MCF 10A (cell line): ENCODE measurements at regions of chr14 and their contacts with region 1.

Region 1: DNA sequence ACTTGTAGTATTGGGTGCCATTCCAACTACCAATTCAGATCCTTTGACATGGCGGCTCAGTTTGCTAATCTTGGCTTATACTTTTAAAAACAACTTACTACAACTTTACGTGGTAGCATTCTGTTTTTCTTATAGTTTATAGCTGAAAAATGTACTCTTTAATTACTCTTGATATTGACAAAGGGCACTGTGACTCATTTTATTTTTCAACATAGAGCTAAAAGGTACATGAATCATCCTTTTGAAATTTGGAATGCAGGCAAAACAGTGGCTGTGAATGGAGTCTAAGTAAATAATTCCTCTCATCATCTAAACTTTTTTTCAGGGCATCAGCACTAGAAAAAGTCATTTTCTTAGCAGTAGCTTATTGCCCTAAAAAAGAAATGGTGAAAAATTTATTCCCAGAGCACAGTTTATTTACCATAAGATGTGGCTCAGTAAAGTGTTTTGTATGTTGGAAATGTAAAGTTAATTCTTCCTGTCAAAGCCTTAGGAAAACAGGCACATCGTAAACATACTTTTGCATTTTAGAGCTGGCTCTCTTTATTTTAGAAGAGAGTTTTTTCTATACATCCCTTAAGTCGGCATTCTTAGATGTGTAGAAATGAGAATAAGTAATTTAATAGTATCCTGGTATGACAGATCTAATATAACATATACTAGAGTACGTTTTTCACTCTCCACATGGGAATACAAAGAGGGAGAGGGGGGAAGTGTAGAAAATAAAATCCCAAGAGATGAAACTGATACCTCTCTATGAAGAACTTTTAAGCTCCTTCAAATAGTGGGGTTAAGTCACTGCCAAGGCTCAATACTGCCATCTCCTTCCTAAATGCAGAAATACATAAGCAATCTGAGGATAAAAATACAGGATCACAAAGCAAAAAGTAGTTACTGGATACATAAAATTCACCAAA is 55.2 kb downstream of the SLC25A21 start:
- DNase-seq: peak; percentile 83
- H3K4me3 Mint-ChIP-seq: peak overlapping the region; percentile 62
- H3K27ac Mint-ChIP-seq: peak overlapping the region; percentile 98
- H3K4me1 Mint-ChIP-seq: peaks cover 31% of the 10 kb centered on the region
- H3K27me3 Mint-ChIP-seq: no peaks in the 10 kb centered on the region
- CTCF ChIP-seq: peak; percentile 70

Region 2: GRCh38 chr14:36647824-36648753 is 469.1 kb before region 1 on chr14:
- CTCF ChIA-PET with region 1: interaction called, 82 read pairs
- POLR2A ChIA-PET with region 1: interaction called, 11 read pairs
- intact Hi-C with region 1: loop called (anchors 1 kb)
- DNase-seq: peak; percentile 63
- H3K4me3 Mint-ChIP-seq: peak overlapping the region; percentile 71
- H3K27ac Mint-ChIP-seq: no peak overlapping the region
- H3K4me1 Mint-ChIP-seq: peaks cover 5% of the 10 kb centered on the region
- H3K27me3 Mint-ChIP-seq: no peaks in the 10 kb centered on the region
- CTCF ChIP-seq: peak; percentile 65

Region 3: GRCh38 chr14:36767603-36768281 is 349.4 kb before region 1 on chr14:
- CTCF ChIA-PET with region 1: interaction called, 4 read pairs
- POLR2A ChIA-PET with region 1: interaction called, 12 read pairs
- intact Hi-C with region 1: no loop called
- DNase-seq: peak; percentile 55
- H3K4me3 Mint-ChIP-seq: no peak overlapping the region
- H3K27ac Mint-ChIP-seq: peak overlapping the region; percentile 32
- H3K4me1 Mint-ChIP-seq: peaks cover 31% of the 10 kb centered on the region
- H3K27me3 Mint-ChIP-seq: no peaks in the 10 kb centered on the region
- CTCF ChIP-seq: no peak

Region 4: GRCh38 chr14:36941783-36942521 is 175.2 kb before region 1 on chr14:
- CTCF ChIA-PET with region 1: interaction called, 56 read pairs
- POLR2A ChIA-PET with region 1: interaction called, 28 read pairs
- intact Hi-C with region 1: loop called (anchors 1 kb)
- DNase-seq: peak; percentile 78
- H3K4me3 Mint-ChIP-seq: no peak overlapping the region
- H3K27ac Mint-ChIP-seq: peak overlapping the region; percentile 96
- H3K4me1 Mint-ChIP-seq: peaks cover 24% of the 10 kb centered on the region
- H3K27me3 Mint-ChIP-seq: no peaks in the 10 kb centered on the region
- CTCF ChIP-seq: peak; percentile 90

Region 5: DNA sequence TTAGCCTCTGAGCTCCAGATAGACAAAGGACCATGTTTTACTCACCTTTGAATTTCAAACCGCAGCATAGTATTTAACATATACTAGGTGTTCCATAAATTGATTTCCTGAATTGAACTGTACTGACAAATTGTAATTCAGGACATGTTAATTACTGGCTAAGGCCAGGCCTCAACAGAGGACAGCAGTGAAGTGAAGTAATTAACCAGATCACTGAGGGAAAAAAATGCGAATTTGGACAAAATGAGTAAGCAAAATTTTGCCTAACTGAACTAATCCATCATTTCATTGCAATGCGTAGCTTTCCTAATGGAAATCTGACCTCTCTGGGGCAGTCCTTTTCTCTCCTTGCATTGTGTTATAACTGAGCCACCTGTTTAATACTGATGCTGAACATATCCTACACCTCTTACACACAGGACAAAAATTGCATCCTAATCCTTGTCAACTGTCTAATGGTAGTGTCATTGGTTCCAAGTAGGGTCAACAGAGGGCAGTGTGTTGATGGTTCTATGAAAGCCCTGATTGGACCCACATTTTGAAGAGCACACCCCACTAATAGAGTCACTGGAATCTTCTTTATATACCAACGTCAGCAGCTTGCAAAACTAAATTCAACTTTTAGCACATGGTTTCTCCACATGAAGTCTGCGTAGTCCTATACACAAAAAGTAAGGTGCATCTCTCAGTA is 93.2 kb before region 1 on chr14:
- CTCF ChIA-PET with region 1: interaction called, 14 read pairs
- POLR2A ChIA-PET with region 1: no interaction called
- intact Hi-C with region 1: no loop called
- DNase-seq: peak; percentile 17
- H3K4me3 Mint-ChIP-seq: no peak overlapping the region
- H3K27ac Mint-ChIP-seq: no peak overlapping the region
- H3K4me1 Mint-ChIP-seq: no peaks in the 10 kb centered on the region
- H3K27me3 Mint-ChIP-seq: no peaks in the 10 kb centered on the region
- CTCF ChIP-seq: no peak

Region 6: DNA sequence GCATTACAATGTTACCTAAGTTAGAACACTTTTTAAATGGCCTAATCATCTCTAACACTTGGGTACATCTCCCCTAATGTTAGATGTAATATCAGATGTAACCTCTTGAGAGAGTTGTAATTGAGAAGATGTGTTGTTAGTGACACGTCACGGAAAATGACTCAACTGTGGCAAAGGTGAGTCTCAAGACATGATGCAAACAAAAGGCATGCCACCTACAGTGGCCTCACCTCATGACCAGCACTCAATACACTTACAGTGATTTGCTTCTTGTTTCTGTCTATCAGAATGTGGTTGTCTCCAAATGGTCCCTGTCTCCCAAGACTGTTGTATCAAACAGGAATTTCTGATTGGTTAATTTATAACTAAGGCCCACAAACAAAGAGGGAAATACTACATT is 36.0 kb before region 1 on chr14:
- CTCF ChIA-PET with region 1: interaction called, 3 read pairs
- POLR2A ChIA-PET with region 1: interaction called, 4 read pairs
- intact Hi-C with region 1: loop called (anchors 2 kb)
- DNase-seq: peak; percentile 84
- H3K4me3 Mint-ChIP-seq: no peak overlapping the region
- H3K27ac Mint-ChIP-seq: peak overlapping the region; percentile 42
- H3K4me1 Mint-ChIP-seq: no peaks in the 10 kb centered on the region
- H3K27me3 Mint-ChIP-seq: no peaks in the 10 kb centered on the region
- CTCF ChIP-seq: no peak

Region 7: DNA sequence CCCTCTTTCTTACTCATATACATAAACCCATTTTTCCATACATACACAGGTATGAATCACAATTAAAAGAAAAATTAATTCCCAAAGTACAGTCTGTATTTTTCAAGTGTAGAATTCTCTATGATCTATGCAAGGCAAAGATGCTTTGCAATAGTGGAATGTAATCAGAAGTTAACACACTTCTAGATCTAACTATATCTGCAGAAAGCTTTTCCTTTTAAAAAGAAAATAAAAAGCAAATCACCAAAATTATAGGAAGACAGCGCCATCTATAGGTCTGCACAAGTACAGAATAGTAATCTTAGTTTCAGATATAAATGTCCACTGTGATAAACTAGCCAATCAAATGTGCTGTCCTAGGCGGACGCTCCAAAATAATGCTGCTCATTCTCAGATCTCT is 33.2 kb after region 1 on chr14:
- CTCF ChIA-PET with region 1: interaction called, 14 read pairs
- POLR2A ChIA-PET with region 1: interaction called, 3 read pairs
- intact Hi-C with region 1: loop called (anchors 2 kb)
- DNase-seq: peak; percentile 63
- H3K4me3 Mint-ChIP-seq: no peak overlapping the region
- H3K27ac Mint-ChIP-seq: peak overlapping the region; percentile 16
- H3K4me1 Mint-ChIP-seq: peaks cover 14% of the 10 kb centered on the region
- H3K27me3 Mint-ChIP-seq: no peaks in the 10 kb centered on the region
- CTCF ChIP-seq: peak; percentile 54